HCT116 (cell line): ENCODE measurements at regions of chr6 and their contacts with region 1.

Region 1: DNA sequence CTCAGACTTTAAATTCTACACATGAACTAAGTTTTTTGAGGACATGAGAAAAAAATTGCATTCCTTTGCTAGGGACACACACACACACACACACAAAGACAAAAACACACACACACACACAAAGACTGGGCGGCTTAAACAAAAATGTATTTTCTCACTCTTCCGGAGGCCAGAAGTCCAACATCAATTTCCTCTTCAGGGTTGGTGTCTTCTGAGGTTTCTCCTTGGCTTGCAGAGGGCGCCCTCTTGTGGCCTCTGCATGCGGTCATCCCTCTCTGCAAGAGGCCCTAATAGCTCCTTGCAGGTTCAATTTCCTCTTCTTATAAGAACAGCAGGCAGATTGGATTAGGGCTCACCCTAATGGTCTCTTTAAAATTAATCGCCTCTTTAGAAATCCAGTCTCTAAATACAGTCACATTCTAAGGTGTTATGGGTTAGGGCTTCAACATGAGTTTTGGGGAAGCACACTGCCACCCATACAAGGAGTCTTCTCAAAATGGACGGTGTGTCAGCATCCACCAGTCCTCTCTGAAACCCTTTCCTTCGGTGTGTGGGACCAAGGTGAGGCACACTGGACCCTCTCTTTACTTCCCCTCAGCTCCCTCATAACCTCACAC is 61.4 kb downstream of the GPR6 start:
- DNase-seq: peak; percentile 80
- ATAC-seq: peak; percentile 91
- H3K4me3 ChIP-seq: peak overlapping the region in 1 of 2 experiments; percentile 29; a peak in 1 of 4 replicates
- H3K27ac ChIP-seq: no peak overlapping the region
- H3K4me1 ChIP-seq: peaks cover 2 to 19% of the 10 kb centered on the region in 2 experiments; a peak in 3 of 4 replicates
- H3K27me3 ChIP-seq: no peaks in the 10 kb centered on the region
- CTCF ChIP-seq: peak; percentile 89 to 98 (median 98)
- POLR2A ChIP-seq: no peak
- RAD21 ChIP-seq: peak; percentile 99

Region 2: GRCh38 chr6:109526905-109527628 is 512.4 kb before region 1 on chr6:
- CTCF ChIA-PET with region 1: interaction called, 28 read pairs
- POLR2A ChIA-PET with region 1: interaction called, 3 read pairs
- RAD21 ChIA-PET with region 1: interaction called in 1 of 2 experiments, 4 read pairs
- intact Hi-C with region 1: loop called (anchors 1 kb)
- DNase-seq: peak; percentile 69
- ATAC-seq: peak; percentile 96
- H3K4me3 ChIP-seq: no peak overlapping the region
- H3K27ac ChIP-seq: no peak overlapping the region
- H3K4me1 ChIP-seq: no peaks in the 10 kb centered on the region
- H3K27me3 ChIP-seq: no peaks in the 10 kb centered on the region
- CTCF ChIP-seq: peak; percentile 58 to 80 (median 78)
- POLR2A ChIP-seq: no peak
- RAD21 ChIP-seq: peak; percentile 86

Region 3: GRCh38 chr6:109595998-109596397 is 443.5 kb before region 1 on chr6:
- CTCF ChIA-PET with region 1: interaction called, 17 read pairs
- POLR2A ChIA-PET with region 1: no interaction called
- RAD21 ChIA-PET with region 1: no interaction called
- intact Hi-C with region 1: loop called (anchors 10 kb)
- DNase-seq: peak; percentile 18
- ATAC-seq: peak; percentile 72
- H3K4me3 ChIP-seq: no peak overlapping the region
- H3K27ac ChIP-seq: no peak overlapping the region
- H3K4me1 ChIP-seq: no peaks in the 10 kb centered on the region
- H3K27me3 ChIP-seq: no peaks in the 10 kb centered on the region
- CTCF ChIP-seq: peak; percentile 37 to 60 (median 51); a peak in 4 of 6 replicates
- POLR2A ChIP-seq: no peak
- RAD21 ChIP-seq: peak; percentile 64

Region 4: GRCh38 chr6:109705258-109705657 is 334.2 kb before region 1 on chr6:
- CTCF ChIA-PET with region 1: interaction called, 116 read pairs
- POLR2A ChIA-PET with region 1: interaction called, 4 read pairs
- RAD21 ChIA-PET with region 1: interaction called, 21 to 23 read pairs
- intact Hi-C with region 1: loop called (anchors 1 kb)
- DNase-seq: peak; percentile 78
- ATAC-seq: peak; percentile 99
- H3K4me3 ChIP-seq: no peak overlapping the region
- H3K27ac ChIP-seq: no peak overlapping the region
- H3K4me1 ChIP-seq: peaks cover 0 to 3% of the 10 kb centered on the region in 2 experiments; a peak in 1 of 4 replicates
- H3K27me3 ChIP-seq: no peaks in the 10 kb centered on the region
- CTCF ChIP-seq: peak; percentile 92 to 100 (median 100)
- POLR2A ChIP-seq: no peak
- RAD21 ChIP-seq: peak; percentile 100

Region 5: DNA sequence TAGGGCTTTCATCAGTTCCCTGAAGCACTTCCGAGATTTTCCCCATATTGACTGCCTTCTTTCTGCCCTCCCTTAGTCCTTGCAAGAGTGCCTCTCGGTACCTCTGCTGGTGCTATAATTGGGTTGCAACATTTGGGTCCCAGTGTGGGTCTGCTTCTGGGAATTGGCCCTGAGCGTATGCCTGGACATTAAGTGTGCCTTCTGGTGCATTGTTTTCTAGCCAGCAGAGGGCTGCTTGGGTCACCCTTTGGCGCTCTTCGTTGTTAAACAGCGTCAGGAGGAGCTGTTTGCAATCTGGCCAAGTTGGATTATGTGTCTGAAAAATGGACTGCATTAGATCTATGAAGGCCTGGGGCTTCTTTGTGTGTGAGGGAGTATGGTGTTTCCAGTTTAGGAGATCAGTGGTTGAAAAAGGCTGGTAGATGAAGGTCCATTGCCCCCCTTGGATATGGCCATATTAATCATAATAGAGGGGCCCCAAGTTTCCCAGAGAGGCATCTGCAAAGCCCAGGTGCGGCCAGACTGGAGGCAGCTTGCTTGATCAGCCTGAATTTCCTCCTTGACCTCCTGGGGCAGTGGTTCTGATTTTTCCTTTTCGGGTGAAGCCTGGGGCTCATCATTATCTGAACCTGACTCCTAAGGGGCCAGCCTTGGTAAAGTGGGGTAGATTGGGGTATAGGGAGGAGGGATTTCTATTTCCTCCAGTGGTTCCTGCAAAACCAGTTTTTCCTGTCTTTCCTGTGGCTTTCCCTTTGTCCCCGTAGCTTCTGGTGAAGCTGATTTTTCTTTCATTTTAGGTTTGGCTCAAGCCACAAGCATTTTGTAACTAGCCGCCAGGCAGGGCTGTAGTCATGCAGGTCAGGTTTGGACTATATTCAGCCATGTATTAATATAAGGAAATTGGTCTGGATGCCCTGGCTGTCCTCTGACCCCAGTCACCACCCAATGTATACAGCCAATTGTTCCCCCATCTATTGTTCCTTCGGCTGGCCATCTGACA is 146.7 kb before region 1 on chr6:
- CTCF ChIA-PET with region 1: interaction called, 71 read pairs
- POLR2A ChIA-PET with region 1: interaction called, 5 read pairs
- RAD21 ChIA-PET with region 1: interaction called, 12 to 15 read pairs
- intact Hi-C with region 1: loop called (anchors 1 kb)
- DNase-seq: peak; percentile 82
- ATAC-seq: peak; percentile 84
- H3K4me3 ChIP-seq: peak overlapping the region; percentile 20 to 35
- H3K27ac ChIP-seq: peak overlapping the region; percentile 40
- H3K4me1 ChIP-seq: peaks cover 14 to 32% of the 10 kb centered on the region in 2 experiments
- H3K27me3 ChIP-seq: no peaks in the 10 kb centered on the region
- CTCF ChIP-seq: peak; percentile 53 to 73 (median 60)
- POLR2A ChIP-seq: no peak
- RAD21 ChIP-seq: peak; percentile 85

Region 6: GRCh38 chr6:110029144-110029543 is 10.3 kb before region 1 on chr6:
- CTCF ChIA-PET with region 1: interaction called, 11 read pairs
- POLR2A ChIA-PET with region 1: no interaction called
- RAD21 ChIA-PET with region 1: interaction called, 3 read pairs
- intact Hi-C with region 1: no loop called
- DNase-seq: no peak
- ATAC-seq: no peak
- H3K4me3 ChIP-seq: no peak overlapping the region
- H3K27ac ChIP-seq: no peak overlapping the region
- H3K4me1 ChIP-seq: no peaks in the 10 kb centered on the region
- H3K27me3 ChIP-seq: no peaks in the 10 kb centered on the region
- CTCF ChIP-seq: no peak
- POLR2A ChIP-seq: no peak
- RAD21 ChIP-seq: no peak

Region 7: GRCh38 chr6:110053395-110054240 is 14.1 kb after region 1 on chr6:
- CTCF ChIA-PET with region 1: interaction called, 20 read pairs
- POLR2A ChIA-PET with region 1: no interaction called
- RAD21 ChIA-PET with region 1: interaction called in 1 of 2 experiments, 5 read pairs
- intact Hi-C with region 1: no loop called
- DNase-seq: peak; percentile 40
- ATAC-seq: peak; percentile 81
- H3K4me3 ChIP-seq: no peak overlapping the region
- H3K27ac ChIP-seq: no peak overlapping the region
- H3K4me1 ChIP-seq: no peaks in the 10 kb centered on the region
- H3K27me3 ChIP-seq: peaks cover 4% of the 10 kb centered on the region; the same call in 1 of the 2 replicates
- CTCF ChIP-seq: peak; percentile 73 to 87 (median 82)
- POLR2A ChIP-seq: no peak
- RAD21 ChIP-seq: peak; percentile 86